ENCODE measurements at regions of chrX and their contacts with region 1.

Region 1: GRCh38 chrX:120244735-120245498 is 5.7 kb upstream of the ZBTB33 start:
- DNase-seq: peak; percentile 44
- CTCF ChIP-seq: no peak

Region 2: DNA sequence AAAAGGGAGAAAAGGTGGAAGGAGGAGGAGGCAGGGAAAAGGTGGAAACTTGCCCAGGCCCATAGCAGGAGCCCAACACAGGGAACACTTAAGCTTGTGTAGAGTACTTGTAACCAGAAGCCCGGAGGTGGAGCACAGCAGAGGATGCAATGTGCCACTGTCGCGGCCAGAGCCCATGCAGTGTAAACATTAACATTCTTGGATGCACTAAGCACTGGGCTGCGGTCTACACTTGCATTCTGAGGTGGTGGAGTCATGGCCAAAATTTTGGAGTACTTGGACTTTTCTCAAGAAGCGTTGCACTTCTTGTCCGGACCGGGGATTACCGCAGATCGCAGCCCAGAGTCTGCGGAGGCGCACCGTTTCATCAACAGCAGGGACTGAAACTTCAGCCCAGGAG is 124.7 kb before region 1 on chrX:
- in situ Hi-C with region 1: loop called (anchors 25 kb)
- DNase-seq: no peak
- CTCF ChIP-seq: no peak

Region 3: DNA sequence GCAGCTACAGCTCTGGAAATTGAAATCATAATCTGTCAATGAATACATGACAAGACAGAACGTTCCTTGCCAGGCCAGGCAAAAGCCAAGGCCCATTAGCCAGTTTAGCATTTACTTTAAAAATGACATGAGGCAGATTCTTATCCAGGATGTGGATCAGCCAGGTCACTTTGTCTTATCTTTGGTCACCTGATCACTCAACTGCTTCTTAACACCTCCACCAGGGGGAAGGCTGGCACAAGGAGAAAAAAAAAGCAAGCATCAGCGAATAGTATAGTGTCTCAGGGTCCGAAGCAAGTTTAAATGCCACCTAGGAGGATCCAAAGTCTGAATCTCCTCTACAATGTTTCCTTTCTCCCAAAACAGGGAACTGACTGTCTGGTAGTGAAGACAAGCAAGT is 135.8 kb after region 1 on chrX:
- in situ Hi-C with region 1: no loop called
- DNase-seq: peak; percentile 23
- CTCF ChIP-seq: peak; percentile 37